Heart right ventricle (tissue), 16 donors: ENCODE measurements at regions of chr3 and their contacts with region 1.

Region 1: DNA sequence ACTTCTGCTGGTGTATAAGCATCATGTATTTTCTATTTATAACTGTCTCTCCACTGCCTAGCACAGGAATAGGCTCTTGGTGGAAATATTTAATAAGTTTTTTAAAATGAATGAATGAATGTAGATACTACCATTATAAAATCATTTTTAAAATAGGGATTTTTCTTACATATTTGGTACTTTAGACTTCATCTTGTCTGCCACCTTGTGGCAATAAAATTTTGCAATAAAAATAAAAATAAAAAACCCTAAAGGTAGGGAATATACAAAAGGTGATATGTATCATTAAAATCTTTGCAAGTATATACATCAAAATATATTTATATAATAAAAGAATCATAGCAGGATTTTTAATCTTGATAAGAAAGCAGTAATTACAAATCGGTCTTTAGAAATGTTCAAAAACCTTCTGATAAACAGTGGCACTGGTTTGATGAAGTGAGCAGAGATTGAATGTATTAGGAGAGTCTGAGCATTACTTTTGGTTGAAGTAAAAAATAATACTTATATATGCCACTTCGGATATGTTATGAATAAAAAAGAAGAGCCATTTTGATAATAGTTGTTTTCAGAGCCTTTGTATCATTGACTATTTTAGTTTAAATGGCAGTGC is 95.2 kb downstream of the SPATA16 start:
- DNase-seq: no peak
- ATAC-seq: no peak
- H3K4me3 ChIP-seq: no peak overlapping the region
- H3K27ac ChIP-seq: no peak overlapping the region
- H3K4me1 ChIP-seq: peaks cover 0 to 8% (median 0%) of the 10 kb centered on the region in 9 donors
- H3K27me3 ChIP-seq: no peaks in the 10 kb centered on the region
- CTCF ChIP-seq: peak in 8 of 9 donors; percentile 19 to 59 (median 43)

Region 2: GRCh38 chr3:172814738-172815137 is 231.1 kb before region 1 on chr3:
- intact Hi-C with region 1: loop called in 3 of 10 experiments (anchors 5 kb)
- DNase-seq: no peak
- ATAC-seq: peak in 3 of 8 donors; percentile 10 to 41 (median 22)
- H3K4me3 ChIP-seq: no peak overlapping the region
- H3K27ac ChIP-seq: peak overlapping the region in 3 of 10 donors; percentile 58 to 76 (median 69)
- H3K4me1 ChIP-seq: peaks cover 0 to 13% (median 0%) of the 10 kb centered on the region in 9 donors
- H3K27me3 ChIP-seq: no peaks in the 10 kb centered on the region
- CTCF ChIP-seq: no peak

Region 3: GRCh38 chr3:172836390-172836997 is 209.4 kb before region 1 on chr3:
- intact Hi-C with region 1: loop called in 8 of 10 experiments (anchors 5 to 10 kb)
- DNase-seq: peak in 1 of 2 donors; percentile 62
- ATAC-seq: peak in 2 of 8 donors; percentile 63 to 74
- H3K4me3 ChIP-seq: no peak overlapping the region
- H3K27ac ChIP-seq: no peak overlapping the region
- H3K4me1 ChIP-seq: no peaks in the 10 kb centered on the region
- H3K27me3 ChIP-seq: no peaks in the 10 kb centered on the region
- CTCF ChIP-seq: peak; percentile 23 to 72 (median 63)

Region 4: DNA sequence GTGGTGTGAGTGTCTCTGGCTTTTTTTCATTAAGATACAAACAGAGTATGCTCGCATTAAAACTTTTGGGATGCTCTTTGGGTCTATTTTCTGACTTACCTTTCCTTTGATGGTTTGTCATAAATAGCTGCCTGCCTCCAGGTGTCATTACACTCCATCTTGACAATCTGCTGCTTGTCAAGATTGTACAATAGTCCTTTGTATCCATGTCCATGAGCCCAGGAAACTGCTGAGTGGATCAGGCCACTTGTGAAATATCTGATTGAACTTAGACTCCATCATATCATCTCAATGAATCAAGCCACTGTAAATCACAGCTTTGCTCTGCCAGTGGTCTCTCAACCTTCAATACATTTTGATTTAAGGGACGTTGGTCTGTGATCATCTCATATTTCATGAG is 160.2 kb before region 1 on chr3:
- intact Hi-C with region 1: no loop called
- DNase-seq: no peak
- ATAC-seq: no peak
- H3K4me3 ChIP-seq: no peak overlapping the region
- H3K27ac ChIP-seq: no peak overlapping the region
- H3K4me1 ChIP-seq: peaks cover 0 to 11% (median 0%) of the 10 kb centered on the region in 9 donors
- H3K27me3 ChIP-seq: no peaks in the 10 kb centered on the region
- CTCF ChIP-seq: no peak

Region 5: DNA sequence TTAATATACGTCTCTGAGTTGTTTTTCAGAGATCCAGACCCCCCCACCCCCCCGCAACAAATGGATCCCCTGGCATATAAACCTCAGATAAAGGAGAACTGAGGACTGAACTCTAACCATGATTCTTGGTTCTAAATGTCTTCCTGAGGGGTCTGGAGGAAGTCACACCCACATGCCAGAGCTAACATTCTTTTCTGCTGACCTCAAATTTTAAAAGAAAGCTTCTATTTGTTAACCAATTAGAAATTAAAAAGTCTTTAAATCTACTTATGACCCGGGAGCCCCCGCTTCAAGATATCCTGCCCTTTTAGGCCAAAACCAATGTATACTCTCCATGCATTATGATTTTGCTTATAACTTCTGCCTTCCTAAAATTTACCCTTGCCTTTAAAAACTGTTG is 107.1 kb before region 1 on chr3:
- intact Hi-C with region 1: no loop called
- DNase-seq: no peak
- ATAC-seq: no peak
- H3K4me3 ChIP-seq: no peak overlapping the region
- H3K27ac ChIP-seq: no peak overlapping the region
- H3K4me1 ChIP-seq: peaks cover 0 to 8% (median 0%) of the 10 kb centered on the region in 9 donors
- H3K27me3 ChIP-seq: no peaks in the 10 kb centered on the region
- CTCF ChIP-seq: no peak

Region 6: DNA sequence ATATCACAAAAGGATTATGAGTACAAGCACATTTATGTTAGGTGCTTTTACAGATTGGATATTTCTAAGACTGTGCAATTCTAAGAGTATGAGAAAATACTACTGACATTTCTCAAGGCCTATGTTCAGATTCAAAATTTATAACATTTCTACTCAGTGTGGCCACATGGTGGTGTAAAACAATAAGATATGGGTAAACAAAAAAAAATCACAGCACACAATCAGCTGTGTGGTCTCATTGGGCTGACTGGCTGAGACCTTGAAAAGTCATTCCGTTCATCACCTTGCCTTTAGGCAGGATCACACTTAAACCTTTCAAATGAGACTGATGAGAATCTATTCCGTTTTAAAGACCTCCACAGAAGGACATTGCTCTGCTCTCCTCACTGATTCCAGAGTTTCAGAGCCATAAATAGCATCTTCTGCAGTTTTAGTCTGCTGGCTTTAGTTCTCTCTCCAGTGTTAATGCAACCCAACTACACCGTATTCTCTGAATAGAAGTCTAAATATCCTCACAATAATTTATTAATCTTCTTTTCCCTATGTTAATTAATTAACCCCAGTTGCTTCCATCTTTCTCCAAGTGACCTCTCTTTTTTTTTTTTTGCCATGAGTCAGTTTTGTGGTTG is 63.0 kb before region 1 on chr3:
- intact Hi-C with region 1: loop called in 1 of 10 experiments (anchors 5 kb)
- DNase-seq: no peak
- ATAC-seq: peak in 6 of 8 donors; percentile 38 to 83 (median 58)
- H3K4me3 ChIP-seq: no peak overlapping the region
- H3K27ac ChIP-seq: no peak overlapping the region
- H3K4me1 ChIP-seq: peaks cover 0 to 14% (median 0%) of the 10 kb centered on the region in 9 donors
- H3K27me3 ChIP-seq: no peaks in the 10 kb centered on the region
- CTCF ChIP-seq: peak in 8 of 9 donors; percentile 21 to 55 (median 38)